Activated naive CD4-positive, alpha-beta T cell treated with anti-CD3 and anti-CD28 coated beads for 36 hours (primary cell): ENCODE measurements at regions of chr9 and their contacts with region 1.

Region 1: GRCh38 chr9:22105005-22105722 is 96.1 kb upstream of the CDKN2B start:
- DNase-seq: no peak
- H3K4me3 Mint-ChIP-seq: no peak overlapping the region
- H3K27ac Mint-ChIP-seq: no peak overlapping the region
- H3K4me1 Mint-ChIP-seq: peaks cover 5% of the 10 kb centered on the region
- H3K27me3 Mint-ChIP-seq: peaks cover 6% of the 10 kb centered on the region

Region 2: GRCh38 chr9:22119537-22120158 is 14.5 kb after region 1 on chr9:
- CTCF ChIA-PET with region 1: interaction called, 12 read pairs
- intact Hi-C with region 1: no loop called
- DNase-seq: peak; percentile 32
- H3K4me3 Mint-ChIP-seq: no peak overlapping the region
- H3K27ac Mint-ChIP-seq: no peak overlapping the region
- H3K4me1 Mint-ChIP-seq: no peaks in the 10 kb centered on the region
- H3K27me3 Mint-ChIP-seq: peaks cover 9% of the 10 kb centered on the region

Region 3: GRCh38 chr9:22134390-22134789 is 29.2 kb after region 1 on chr9:
- CTCF ChIA-PET with region 1: no interaction called
- intact Hi-C with region 1: no loop called
- DNase-seq: no peak
- H3K4me3 Mint-ChIP-seq: no peak overlapping the region
- H3K27ac Mint-ChIP-seq: no peak overlapping the region
- H3K4me1 Mint-ChIP-seq: no peaks in the 10 kb centered on the region
- H3K27me3 Mint-ChIP-seq: peaks cover 16% of the 10 kb centered on the region